Caco-2 (cell line): ENCODE measurements at regions of chr12 and their contacts with region 1.

Region 1: GRCh38 chr12:12786716-12787601 is 1.5 kb downstream of the APOLD1 start:
- DNase-seq: peak; percentile 89 to 94
- H3K4me3 ChIP-seq: peak overlapping the region; percentile 65
- H3K4me3 Mint-ChIP-seq: peak overlapping the region; percentile 88
- H3K27ac Mint-ChIP-seq: peak overlapping the region; percentile 95
- H3K4me1 ChIP-seq: peaks cover 48% of the 10 kb centered on the region
- H3K4me1 Mint-ChIP-seq: peaks cover 23% of the 10 kb centered on the region
- H3K27me3 ChIP-seq: no peaks in the 10 kb centered on the region
- H3K27me3 Mint-ChIP-seq: no peaks in the 10 kb centered on the region
- CTCF ChIP-seq: peak in 1 of 2 experiments; percentile 26

Region 2: DNA sequence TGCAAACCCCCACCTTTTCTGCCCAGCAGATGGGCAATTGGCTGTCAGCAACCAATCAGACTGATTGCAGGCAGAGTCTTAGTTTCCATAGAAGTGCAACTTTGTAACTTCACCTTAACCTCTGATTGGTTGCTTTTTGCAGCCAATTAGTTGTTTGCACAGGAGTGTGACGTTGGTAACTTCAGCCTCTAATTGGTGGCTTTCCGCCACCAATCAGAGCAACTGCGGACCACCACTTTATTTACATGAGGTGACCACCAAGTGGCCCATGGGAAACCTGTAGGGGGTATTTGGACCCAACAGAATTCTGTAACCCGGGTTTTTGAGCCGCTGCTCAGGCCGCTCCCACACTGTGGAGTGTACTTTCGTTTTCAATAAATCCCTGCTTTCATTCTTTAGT is 37.5 kb before region 1 on chr12:
- CTCF ChIA-PET with region 1: no interaction called
- POLR2A ChIA-PET with region 1: no interaction called
- intact Hi-C with region 1: no loop called
- DNase-seq: no peak
- H3K4me3 ChIP-seq: no peak overlapping the region
- H3K4me3 Mint-ChIP-seq: no peak overlapping the region
- H3K27ac Mint-ChIP-seq: no peak overlapping the region
- H3K4me1 ChIP-seq: no peaks in the 10 kb centered on the region
- H3K4me1 Mint-ChIP-seq: peaks cover 14% of the 10 kb centered on the region
- H3K27me3 ChIP-seq: no peaks in the 10 kb centered on the region
- H3K27me3 Mint-ChIP-seq: no peaks in the 10 kb centered on the region
- CTCF ChIP-seq: no peak

Region 3: GRCh38 chr12:12813120-12814101 is 26.5 kb after region 1 on chr12 and contains the start of gene DDX47:
- CTCF ChIA-PET with region 1: interaction called, 6 read pairs
- POLR2A ChIA-PET with region 1: interaction called, 9 read pairs
- intact Hi-C with region 1: loop called (anchors 1 kb)
- DNase-seq: peak; percentile 97 to 99
- H3K4me3 ChIP-seq: peak within 1 kb of the TSS; percentile 78
- H3K4me3 Mint-ChIP-seq: peak within 1 kb of the TSS; percentile 96
- H3K27ac Mint-ChIP-seq: peak within 1 kb of the TSS; percentile 95
- H3K4me1 ChIP-seq: peaks cover 52% of the 10 kb centered on the region
- H3K4me1 Mint-ChIP-seq: peaks cover 39% of the 10 kb centered on the region
- H3K27me3 ChIP-seq: no peaks in the 10 kb centered on the region
- H3K27me3 Mint-ChIP-seq: no peaks in the 10 kb centered on the region
- CTCF ChIP-seq: peak; percentile 99
- total RNA-seq, gene DDX47: 121 and 138 TPM in 2 replicates

Region 4: DNA sequence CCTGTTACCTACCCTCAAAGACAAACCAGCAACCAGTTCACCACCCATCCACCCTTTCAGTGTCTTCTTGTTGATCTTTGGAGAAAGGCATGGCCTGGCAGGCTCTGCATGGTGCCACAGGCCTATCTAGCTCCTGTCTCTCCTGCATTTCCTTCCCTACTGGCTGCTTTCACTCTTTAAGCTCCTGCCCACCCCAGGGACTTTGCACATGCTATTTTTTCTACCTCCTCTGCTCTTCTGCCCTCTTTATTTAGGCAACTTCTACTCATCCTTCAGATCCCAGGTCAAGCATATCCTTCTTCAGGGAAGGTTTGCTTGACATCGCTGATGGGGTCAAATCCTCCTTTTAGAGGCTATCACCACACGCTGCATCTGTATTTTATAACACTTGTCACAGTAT is 77.3 kb after region 1 on chr12:
- CTCF ChIA-PET with region 1: no interaction called
- POLR2A ChIA-PET with region 1: no interaction called
- intact Hi-C with region 1: no loop called
- DNase-seq: no peak
- H3K4me3 ChIP-seq: no peak overlapping the region
- H3K4me3 Mint-ChIP-seq: no peak overlapping the region
- H3K27ac Mint-ChIP-seq: no peak overlapping the region
- H3K4me1 ChIP-seq: peaks cover 10% of the 10 kb centered on the region; the same call in 1 of the 2 replicates
- H3K4me1 Mint-ChIP-seq: peaks cover 15% of the 10 kb centered on the region
- H3K27me3 ChIP-seq: no peaks in the 10 kb centered on the region
- H3K27me3 Mint-ChIP-seq: no peaks in the 10 kb centered on the region
- CTCF ChIP-seq: no peak

Region 5: GRCh38 chr12:12883369-12884001 is 96.5 kb after region 1 on chr12:
- CTCF ChIA-PET with region 1: no interaction called
- POLR2A ChIA-PET with region 1: no interaction called
- intact Hi-C with region 1: loop called (anchors 2 kb)
- DNase-seq: peak; percentile 88 to 90
- H3K4me3 ChIP-seq: no peak overlapping the region
- H3K4me3 Mint-ChIP-seq: peak overlapping the region; percentile 70
- H3K27ac Mint-ChIP-seq: peak overlapping the region; percentile 88
- H3K4me1 ChIP-seq: peaks cover 61% of the 10 kb centered on the region
- H3K4me1 Mint-ChIP-seq: peaks cover 80% of the 10 kb centered on the region
- H3K27me3 ChIP-seq: no peaks in the 10 kb centered on the region
- H3K27me3 Mint-ChIP-seq: no peaks in the 10 kb centered on the region
- CTCF ChIP-seq: no peak

Region 6: GRCh38 chr12:12975322-12976077 is 188.5 kb after region 1 on chr12:
- CTCF ChIA-PET with region 1: interaction called, 5 read pairs
- POLR2A ChIA-PET with region 1: interaction called, 6 read pairs
- intact Hi-C with region 1: loop called (anchors 2 kb)
- DNase-seq: peak; percentile 70 to 74
- H3K4me3 ChIP-seq: no peak overlapping the region
- H3K4me3 Mint-ChIP-seq: no peak overlapping the region
- H3K27ac Mint-ChIP-seq: no peak overlapping the region
- H3K4me1 ChIP-seq: peaks cover 21% of the 10 kb centered on the region
- H3K4me1 Mint-ChIP-seq: peaks cover 6% of the 10 kb centered on the region
- H3K27me3 ChIP-seq: no peaks in the 10 kb centered on the region
- H3K27me3 Mint-ChIP-seq: no peaks in the 10 kb centered on the region
- CTCF ChIP-seq: peak; percentile 46 to 78

Region 7: GRCh38 chr12:13094347-13094746 is 307.4 kb after region 1 on chr12:
- CTCF ChIA-PET with region 1: no interaction called
- POLR2A ChIA-PET with region 1: no interaction called
- intact Hi-C with region 1: no loop called
- DNase-seq: no peak
- H3K4me3 ChIP-seq: no peak overlapping the region
- H3K4me3 Mint-ChIP-seq: no peak overlapping the region
- H3K27ac Mint-ChIP-seq: no peak overlapping the region
- H3K4me1 ChIP-seq: peaks cover 23% of the 10 kb centered on the region
- H3K4me1 Mint-ChIP-seq: peaks cover 20% of the 10 kb centered on the region
- H3K27me3 ChIP-seq: no peaks in the 10 kb centered on the region
- H3K27me3 Mint-ChIP-seq: no peaks in the 10 kb centered on the region
- CTCF ChIP-seq: no peak